Transverse colon (tissue), 4 donors: ENCODE measurements at regions of chr2 and their contacts with region 1.

Region 1: DNA sequence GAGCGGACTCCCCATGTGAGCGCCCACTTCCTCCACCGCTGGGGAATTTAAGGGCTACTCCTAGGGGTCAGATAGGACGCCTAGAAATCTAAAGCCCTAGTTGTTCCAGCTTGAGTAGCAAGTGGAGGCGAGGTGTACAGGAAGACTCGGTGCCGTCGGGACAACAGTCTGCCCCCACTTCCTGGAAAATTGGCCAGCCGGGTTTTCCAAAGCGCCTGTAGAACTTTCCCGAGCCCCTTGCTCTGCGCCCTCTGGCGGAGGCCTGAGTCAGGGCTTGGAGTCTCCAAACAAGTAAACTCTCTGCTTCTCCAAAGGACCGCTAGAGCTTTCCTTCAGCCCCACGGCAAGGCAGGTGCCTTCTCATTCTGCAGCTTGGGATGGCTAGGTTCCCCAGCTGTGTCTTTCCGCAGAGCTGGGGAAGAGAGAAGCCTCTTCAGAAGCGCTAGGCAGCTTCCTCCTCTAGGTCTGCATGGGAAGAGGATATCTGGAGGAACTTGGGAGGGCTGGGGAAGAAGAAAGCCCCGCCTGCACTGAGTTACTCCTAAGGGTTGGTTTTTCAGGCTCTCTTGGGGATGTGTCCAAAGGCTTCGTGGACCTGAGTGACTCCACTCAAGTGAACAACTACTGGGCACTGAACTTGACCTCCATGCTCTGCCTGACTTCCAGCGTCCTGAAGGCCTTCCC is 688 bp downstream of the SPR start:
- DNase-seq: peak; percentile 93
- H3K4me3 ChIP-seq: peak overlapping the region; percentile 68 to 95 (median 72)
- H3K27ac ChIP-seq: peak overlapping the region; percentile 91 to 95 (median 92)
- H3K4me1 ChIP-seq: peaks cover 5 to 43% (median 27%) of the 10 kb centered on the region in 4 donors
- H3K27me3 ChIP-seq: peaks cover 11% of the 10 kb centered on the region
- CTCF ChIP-seq: peak; percentile 85 to 93 (median 91)
- EP300 ChIP-seq: no peak
- POLR2A ChIP-seq: no peak

Region 2: GRCh38 chr2:72973566-72974435 is 85.9 kb after region 1 on chr2:
- in situ Hi-C with region 1: no loop called
- intact Hi-C with region 1: loop called (anchors 5 kb)
- DNase-seq: peak; percentile 41
- H3K4me3 ChIP-seq: no peak overlapping the region
- H3K27ac ChIP-seq: no peak overlapping the region
- H3K4me1 ChIP-seq: no peaks in the 10 kb centered on the region
- H3K27me3 ChIP-seq: no peaks in the 10 kb centered on the region
- CTCF ChIP-seq: peak; percentile 54 to 76 (median 71)
- EP300 ChIP-seq: no peak
- POLR2A ChIP-seq: no peak